ENCODE measurements at regions of chr22 and their contacts with region 1.

Region 1: GRCh38 chr22:40679964-40680818 is 907 bp downstream of the MCHR1 start:
- DNase-seq: no peak
- CTCF ChIP-seq: no peak

Region 2: DNA sequence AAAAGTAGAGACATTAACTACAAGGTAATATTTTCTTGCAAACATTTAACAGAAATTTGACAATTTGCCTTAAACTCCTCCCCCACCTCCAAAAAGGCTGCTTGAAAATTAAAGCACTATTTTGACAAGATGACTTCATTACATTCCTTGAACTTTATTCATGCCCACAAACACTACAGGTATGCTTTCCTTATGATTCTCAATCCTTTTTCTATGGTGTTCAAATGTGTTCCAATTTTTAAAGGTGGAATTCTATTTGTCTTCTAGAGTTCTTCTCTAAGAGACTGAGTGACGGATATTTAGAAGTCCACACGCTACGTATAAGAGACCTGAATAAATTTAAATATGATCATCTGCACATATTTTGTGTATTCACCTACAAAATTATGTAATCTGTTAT is 113.1 kb before region 1 on chr22:
- CTCF ChIA-PET with region 1: no interaction called
- POLR2A ChIA-PET with region 1: no interaction called
- DNase-seq: no peak
- CTCF ChIP-seq: no peak

Region 3: GRCh38 chr22:40659166-40659565 is 21.0 kb before region 1 on chr22:
- CTCF ChIA-PET with region 1: no interaction called
- POLR2A ChIA-PET with region 1: no interaction called
- DNase-seq: no peak
- CTCF ChIP-seq: no peak

Region 4: GRCh38 chr22:40714192-40714951 is 34.2 kb after region 1 on chr22:
- CTCF ChIA-PET with region 1: interaction called, 11 read pairs
- POLR2A ChIA-PET with region 1: no interaction called
- DNase-seq: no peak
- CTCF ChIP-seq: no peak

Region 5: DNA sequence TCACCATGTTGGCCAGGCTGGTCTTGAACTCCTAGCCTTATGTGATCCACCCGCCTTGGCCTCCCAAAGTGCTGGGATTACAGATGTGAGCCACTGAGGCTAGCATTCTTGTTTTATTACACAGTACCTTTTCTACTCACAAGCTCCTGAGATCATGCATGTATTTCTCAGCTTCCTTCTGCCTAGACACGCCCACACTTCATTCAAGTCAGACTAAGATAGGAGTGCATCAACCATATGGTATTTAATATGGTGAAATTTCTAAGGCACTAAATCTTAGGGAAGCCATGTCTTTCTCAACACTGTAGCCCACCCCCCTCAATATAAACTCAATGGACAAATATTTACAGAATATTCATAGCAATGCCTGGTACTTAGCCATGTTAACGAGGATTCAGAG is 76.9 kb after region 1 on chr22:
- CTCF ChIA-PET with region 1: interaction called, 32 read pairs
- POLR2A ChIA-PET with region 1: no interaction called
- DNase-seq: no peak
- CTCF ChIP-seq: no peak

Measured in GM10248 (cell line).